Left ventricle myocardium inferior (tissue), 1 donor: ENCODE measurements at regions of chr15 and their contacts with region 1.

Region 1: GRCh38 chr15:101641166-101641764 is 10.9 kb downstream of the TM2D3 start:
- DNase-seq: peak; percentile 75
- H3K4me3 ChIP-seq: peak overlapping the region; percentile 29
- H3K27ac ChIP-seq: peak overlapping the region; percentile 81
- H3K4me1 ChIP-seq: peaks cover 39% of the 10 kb centered on the region
- H3K27me3 ChIP-seq: no peaks in the 10 kb centered on the region
- CTCF ChIP-seq: peak; percentile 95

Region 2: DNA sequence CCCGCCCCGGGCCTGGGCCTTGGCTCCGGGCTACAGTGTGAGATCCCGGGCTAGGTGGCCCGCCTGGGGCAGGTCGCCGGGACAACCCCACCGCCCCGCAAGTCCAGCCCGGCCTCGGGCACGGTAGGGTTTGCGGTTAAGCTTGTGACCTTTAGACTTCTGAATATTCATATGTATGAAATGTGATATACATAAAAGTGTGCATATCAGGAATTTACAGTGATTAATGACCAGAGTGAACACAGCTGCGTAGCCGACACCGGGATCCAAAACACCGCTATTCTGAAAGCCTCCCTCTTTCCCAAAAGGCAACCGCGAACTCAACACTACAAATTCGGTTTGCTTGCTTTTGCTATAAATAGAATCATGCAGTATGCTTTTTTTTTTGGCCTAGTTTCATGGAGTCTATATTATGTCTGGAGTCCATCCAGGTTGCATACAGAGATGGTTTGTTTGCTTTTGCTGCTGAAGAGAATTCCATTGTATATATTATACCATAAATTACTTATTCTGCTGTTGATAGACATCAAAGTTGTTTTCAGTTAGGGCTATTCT is 345.6 kb before region 1 on chr15:
- intact Hi-C with region 1: loop called (anchors 2 kb)
- DNase-seq: no peak
- H3K4me3 ChIP-seq: peak overlapping the region; percentile 87
- H3K27ac ChIP-seq: peak overlapping the region; percentile 95
- H3K4me1 ChIP-seq: peaks cover 56% of the 10 kb centered on the region
- H3K27me3 ChIP-seq: no peaks in the 10 kb centered on the region
- CTCF ChIP-seq: no peak

Region 3: GRCh38 chr15:101827257-101827656 is 186.0 kb after region 1 on chr15:
- intact Hi-C with region 1: no loop called
- DNase-seq: no peak
- H3K4me3 ChIP-seq: no peak overlapping the region
- H3K27ac ChIP-seq: no peak overlapping the region
- H3K4me1 ChIP-seq: no peaks in the 10 kb centered on the region
- H3K27me3 ChIP-seq: peaks cover 41% of the 10 kb centered on the region
- CTCF ChIP-seq: no peak